ENCODE measurements at regions of chr1 and their contacts with region 1.

Region 1: GRCh38 chr1:41241782-41242341 is at the start of gene SCMH1:
- DNase-seq: no peak
- ATAC-seq: peak; percentile 62
- H3K4me3 ChIP-seq: peak within 1 kb of the TSS; percentile 74
- H3K27ac ChIP-seq: peak within 1 kb of the TSS; percentile 92
- H3K4me1 ChIP-seq: peaks cover 17% of the 10 kb centered on the region
- H3K27me3 ChIP-seq: no peaks in the 10 kb centered on the region
- CTCF ChIP-seq: no peak
- EP300 ChIP-seq: no peak
- POLR2A ChIP-seq: 0 out of 2 replicates have a peak, but pooled peaks have one; percentile 1
- RAD21 ChIP-seq: no peak
- polyA plus RNA-seq, gene SCMH1: 7.5 to 7.9 TPM

Region 2: DNA sequence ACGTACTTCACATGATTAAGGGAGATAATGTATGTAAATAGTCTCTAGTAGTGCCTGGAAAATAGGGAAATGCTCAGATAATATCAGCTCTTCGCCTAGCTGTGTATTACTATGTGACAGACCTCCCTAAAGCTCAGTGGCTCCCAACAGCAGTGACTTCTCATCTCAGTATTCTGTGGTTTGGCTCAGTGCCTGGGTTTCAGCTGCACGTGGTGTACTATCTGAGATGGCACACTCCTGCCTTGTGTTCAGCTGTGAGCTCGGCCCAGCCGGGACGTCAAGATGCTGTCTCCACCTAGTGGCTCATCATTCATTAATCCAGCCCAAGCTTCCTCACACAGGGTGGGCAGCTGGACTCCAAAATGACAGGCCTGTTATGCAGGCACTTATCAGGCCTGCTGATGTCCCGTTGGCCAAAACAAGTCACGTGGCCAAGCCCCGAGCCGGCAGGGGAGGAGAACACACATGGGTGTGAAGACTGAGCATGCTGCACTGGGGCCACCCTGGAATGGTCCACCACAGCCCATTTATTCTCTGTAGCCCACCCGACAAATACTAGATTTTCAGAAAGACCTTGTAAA is 238.1 kb before region 1 on chr1:
- CTCF ChIA-PET with region 1: interaction called, 17 read pairs
- POLR2A ChIA-PET with region 1: no interaction called
- RAD21 ChIA-PET with region 1: interaction called, 7 read pairs
- SMC1A ChIA-PET with region 1: interaction called, 4 read pairs
- in situ Hi-C with region 1: no loop called
- intact Hi-C with region 1: no loop called
- DNase-seq: peak; percentile 95
- ATAC-seq: peak; percentile 99
- H3K4me3 ChIP-seq: no peak overlapping the region
- H3K27ac ChIP-seq: no peak overlapping the region
- H3K4me1 ChIP-seq: peaks cover 9% of the 10 kb centered on the region
- H3K27me3 ChIP-seq: no peaks in the 10 kb centered on the region
- CTCF ChIP-seq: peak; percentile 66 to 77 (median 74); a peak in 5 of 6 replicates
- EP300 ChIP-seq: peak; percentile 20 to 42; a peak in 1 of 4 replicates
- POLR2A ChIP-seq: peak; percentile 15; the same call in 1 of the 2 replicates
- RAD21 ChIP-seq: peak; percentile 47

Region 3: GRCh38 chr1:41158147-41158875 is 83.6 kb before region 1 on chr1:
- CTCF ChIA-PET with region 1: interaction called, 5 read pairs
- POLR2A ChIA-PET with region 1: no interaction called
- RAD21 ChIA-PET with region 1: no interaction called
- SMC1A ChIA-PET with region 1: interaction called, 4 read pairs
- in situ Hi-C with region 1: no loop called
- intact Hi-C with region 1: loop called (anchors 5 kb)
- DNase-seq: no peak
- ATAC-seq: no peak
- H3K4me3 ChIP-seq: no peak overlapping the region
- H3K27ac ChIP-seq: no peak overlapping the region
- H3K4me1 ChIP-seq: no peaks in the 10 kb centered on the region
- H3K27me3 ChIP-seq: no peaks in the 10 kb centered on the region
- CTCF ChIP-seq: no peak
- EP300 ChIP-seq: no peak
- POLR2A ChIP-seq: no peak
- RAD21 ChIP-seq: no peak

Region 4: GRCh38 chr1:41230656-41231055 is 11.2 kb before region 1 on chr1:
- CTCF ChIA-PET with region 1: interaction called, 3 read pairs
- POLR2A ChIA-PET with region 1: no interaction called
- RAD21 ChIA-PET with region 1: no interaction called
- SMC1A ChIA-PET with region 1: interaction called, 10 read pairs
- in situ Hi-C with region 1: no loop called
- intact Hi-C with region 1: no loop called
- DNase-seq: no peak
- ATAC-seq: no peak
- H3K4me3 ChIP-seq: no peak overlapping the region
- H3K27ac ChIP-seq: no peak overlapping the region
- H3K4me1 ChIP-seq: no peaks in the 10 kb centered on the region
- H3K27me3 ChIP-seq: no peaks in the 10 kb centered on the region
- CTCF ChIP-seq: no peak
- EP300 ChIP-seq: no peak
- POLR2A ChIP-seq: no peak
- RAD21 ChIP-seq: no peak

Region 5: GRCh38 chr1:41338820-41339219 is 97.0 kb after region 1 on chr1:
- CTCF ChIA-PET with region 1: no interaction called
- POLR2A ChIA-PET with region 1: no interaction called
- RAD21 ChIA-PET with region 1: no interaction called
- SMC1A ChIA-PET with region 1: no interaction called
- in situ Hi-C with region 1: no loop called
- intact Hi-C with region 1: no loop called
- DNase-seq: no peak
- ATAC-seq: no peak
- H3K4me3 ChIP-seq: no peak overlapping the region
- H3K27ac ChIP-seq: no peak overlapping the region
- H3K4me1 ChIP-seq: no peaks in the 10 kb centered on the region
- H3K27me3 ChIP-seq: no peaks in the 10 kb centered on the region
- CTCF ChIP-seq: no peak
- EP300 ChIP-seq: no peak
- POLR2A ChIP-seq: no peak
- RAD21 ChIP-seq: no peak